Dendritic cell treated with granulocyte-macrophage colony-stimulating factor and Interleukin-4, amounts not matched to agents 40 ng/mL and 50 ng/mL, for 4 days (primary cell): ENCODE measurements at regions of chr17 and their contacts with region 1.

Region 1: GRCh38 chr17:68533887-68534694 is 21.9 kb downstream of the PRKAR1A start:
- H3K4me3 Mint-ChIP-seq: no peak overlapping the region
- H3K27ac Mint-ChIP-seq: peak overlapping the region; percentile 46
- H3K4me1 Mint-ChIP-seq: peaks cover 8% of the 10 kb centered on the region
- H3K27me3 Mint-ChIP-seq: no peaks in the 10 kb centered on the region

Region 2: GRCh38 chr17:68468334-68468733 is 65.8 kb before region 1 on chr17:
- intact Hi-C with region 1: no loop called
- H3K4me3 Mint-ChIP-seq: no peak overlapping the region
- H3K27ac Mint-ChIP-seq: no peak overlapping the region
- H3K4me1 Mint-ChIP-seq: peaks cover 13% of the 10 kb centered on the region
- H3K27me3 Mint-ChIP-seq: peaks cover 6% of the 10 kb centered on the region

Region 3: GRCh38 chr17:68613739-68614298 is 79.7 kb after region 1 on chr17:
- intact Hi-C with region 1: loop called (anchors 5 kb)
- H3K4me3 Mint-ChIP-seq: no peak overlapping the region
- H3K27ac Mint-ChIP-seq: no peak overlapping the region
- H3K4me1 Mint-ChIP-seq: peaks cover 21% of the 10 kb centered on the region
- H3K27me3 Mint-ChIP-seq: peaks cover 4% of the 10 kb centered on the region

Region 4: GRCh38 chr17:68759343-68760132 is 225.4 kb after region 1 on chr17:
- intact Hi-C with region 1: loop called (anchors 2 kb)
- H3K4me3 Mint-ChIP-seq: peak overlapping the region; percentile 79
- H3K27ac Mint-ChIP-seq: peak overlapping the region; percentile 95
- H3K4me1 Mint-ChIP-seq: peaks cover 15% of the 10 kb centered on the region
- H3K27me3 Mint-ChIP-seq: no peaks in the 10 kb centered on the region

Region 5: GRCh38 chr17:69246726-69247375 is 712.8 kb after region 1 on chr17:
- intact Hi-C with region 1: loop called (anchors 5 kb)
- H3K4me3 Mint-ChIP-seq: no peak overlapping the region
- H3K27ac Mint-ChIP-seq: no peak overlapping the region
- H3K4me1 Mint-ChIP-seq: no peaks in the 10 kb centered on the region
- H3K27me3 Mint-ChIP-seq: no peaks in the 10 kb centered on the region